ENCODE measurements at regions of chr17 and their contacts with region 1.

Region 1: DNA sequence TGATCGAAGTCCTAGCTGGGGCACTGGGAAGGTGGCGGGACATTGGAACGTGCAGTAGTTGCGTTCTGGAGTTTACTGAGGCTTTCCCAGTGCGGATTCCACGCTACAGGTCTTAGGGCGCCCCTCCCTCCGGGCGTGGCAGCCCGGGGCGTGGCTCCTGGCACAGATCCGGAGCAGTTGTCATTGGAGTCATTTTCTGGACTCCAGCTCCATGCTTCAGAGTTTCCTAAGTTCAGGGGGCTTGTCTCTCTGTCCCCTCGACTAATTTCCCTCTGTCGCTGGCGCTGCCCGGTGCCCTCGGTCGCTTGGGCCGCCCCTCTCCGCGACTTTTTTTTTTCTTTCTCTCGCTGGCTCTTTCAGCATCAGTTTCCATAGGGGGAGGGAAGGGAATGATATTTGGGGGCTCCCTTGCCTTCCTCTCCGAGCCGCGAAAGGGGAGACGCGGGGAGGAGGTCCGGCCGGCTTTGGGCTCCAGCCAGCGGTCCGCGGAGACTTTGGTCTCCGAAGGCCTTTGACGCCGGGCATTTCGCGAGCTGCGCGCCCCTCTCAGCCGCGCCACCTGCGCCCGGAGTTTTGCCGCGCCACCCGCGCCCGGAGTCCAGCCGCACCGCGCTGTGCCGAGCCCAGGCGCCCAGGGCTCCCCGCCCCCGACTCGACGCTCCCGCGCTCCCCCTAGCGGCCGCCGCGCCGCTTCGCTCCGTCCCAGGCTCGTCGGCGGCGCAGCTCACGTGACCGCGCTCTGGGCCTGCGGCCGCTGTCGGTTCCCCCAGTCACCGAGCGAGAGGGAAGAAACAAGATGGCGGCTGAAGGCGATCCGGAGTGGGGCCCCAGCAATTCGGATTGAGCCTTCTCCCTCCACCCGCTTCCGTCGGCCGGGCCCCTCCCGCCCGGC is at the start of gene BPTF:
- DNase-seq: peak; percentile 31
- H3K4me3 ChIP-seq: peak within 1 kb of the TSS; percentile 88
- CTCF ChIP-seq: peak; percentile 89

Region 2: GRCh38 chr17:67800495-67800928 is 24.5 kb before region 1 on chr17:
- CTCF ChIA-PET with region 1: interaction called, 11 read pairs
- POLR2A ChIA-PET with region 1: no interaction called
- DNase-seq: peak; percentile 4
- H3K4me3 ChIP-seq: no peak overlapping the region
- CTCF ChIP-seq: peak; percentile 74

Region 3: DNA sequence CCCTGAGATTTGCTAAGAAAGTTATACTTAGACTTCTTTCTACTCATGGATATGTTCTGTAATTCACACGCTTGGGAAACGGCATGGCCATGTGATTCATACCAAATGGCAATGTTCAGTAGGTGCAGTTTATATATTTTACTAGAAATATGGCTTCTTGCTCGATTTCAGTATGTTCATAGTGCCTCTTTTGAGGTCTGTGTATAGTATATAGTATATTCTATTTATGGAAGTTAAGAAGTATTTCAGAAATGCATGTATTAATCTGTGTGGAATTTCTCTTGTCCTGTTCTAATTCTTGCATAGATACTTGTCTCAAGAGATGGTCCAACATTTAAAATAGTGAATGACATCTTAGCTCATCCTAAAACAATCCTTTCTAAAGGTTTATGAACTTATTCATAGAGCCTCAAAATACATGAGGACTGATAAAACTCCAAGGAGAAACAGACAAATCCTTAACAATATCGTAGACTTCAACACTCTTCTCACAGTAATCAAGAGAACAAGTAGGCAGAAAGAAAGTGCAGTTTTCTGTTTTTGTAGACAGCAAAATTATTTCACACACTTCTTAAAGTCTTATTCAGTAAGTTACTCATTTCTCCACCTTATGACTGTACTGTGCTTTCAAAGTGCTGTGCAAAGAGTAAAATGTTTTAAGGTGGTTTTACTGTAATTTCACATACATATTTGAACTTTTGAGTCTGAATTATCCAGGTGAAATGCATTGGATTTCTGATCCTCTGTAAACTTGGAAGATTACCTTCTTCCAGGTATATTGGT is 11.4 kb after region 1 on chr17:
- CTCF ChIA-PET with region 1: interaction called, 11 read pairs
- POLR2A ChIA-PET with region 1: interaction called, 4 read pairs
- DNase-seq: peak; percentile 60
- H3K4me3 ChIP-seq: no peak overlapping the region
- CTCF ChIP-seq: no peak

Measured in AG04449 (cell line).